PC-9 (cell line): ENCODE measurements at regions of chr2 and their contacts with region 1.

Region 1: DNA sequence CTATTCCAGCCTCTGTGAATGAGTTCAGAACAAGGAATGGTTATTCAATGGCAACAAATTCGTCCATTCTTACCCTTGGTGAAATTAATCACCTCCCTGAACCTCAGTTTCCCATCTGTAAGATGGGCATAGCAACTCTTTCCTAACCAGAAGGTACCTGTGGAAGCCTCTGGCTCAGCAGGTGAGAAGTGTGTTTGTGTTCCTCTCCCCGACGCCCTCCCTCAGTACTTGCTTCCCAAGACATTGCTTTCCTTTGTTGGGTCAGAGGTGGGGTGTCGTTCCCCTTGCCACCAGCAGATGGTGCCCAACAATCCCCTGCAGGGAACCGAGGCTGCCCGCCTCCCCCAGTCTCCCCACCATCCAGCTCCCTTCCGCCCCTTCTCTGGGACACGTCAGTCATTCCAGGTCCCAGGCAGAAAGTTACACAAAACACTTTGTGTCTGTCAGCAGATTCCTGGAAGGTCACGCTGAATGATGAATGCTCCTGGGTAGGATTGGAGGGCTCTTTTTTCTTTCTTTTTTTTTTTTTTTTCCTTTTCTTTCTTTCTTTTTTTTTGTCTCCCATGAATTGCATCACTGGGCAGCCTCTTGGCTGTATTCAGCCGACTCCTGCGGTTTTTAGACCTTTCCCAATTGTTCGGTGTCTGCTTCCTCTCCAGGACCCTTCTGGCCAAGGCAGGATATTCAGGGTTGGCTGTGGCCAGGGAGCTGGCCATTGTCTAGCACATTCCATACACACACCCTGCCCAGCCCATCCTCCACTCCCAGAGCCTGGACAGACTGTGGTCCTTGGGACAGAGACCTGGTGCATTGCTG is 117.3 kb downstream of the LPIN1 start:
- DNase-seq: peak; percentile 84 to 91
- H3K4me3 ChIP-seq: no peak overlapping the region
- H3K27ac ChIP-seq: peak overlapping the region; percentile 36
- H3K4me1 ChIP-seq: peaks cover 20% of the 10 kb centered on the region
- H3K27me3 ChIP-seq: no peaks in the 10 kb centered on the region
- CTCF ChIP-seq: peak; percentile 99

Region 2: GRCh38 chr2:11829947-11830707 is 33.6 kb before region 1 on chr2:
- CTCF ChIA-PET with region 1: no interaction called
- POLR2A ChIA-PET with region 1: no interaction called
- intact Hi-C with region 1: loop called (anchors 1 kb)
- DNase-seq: peak; percentile 85 to 99
- H3K4me3 ChIP-seq: peak overlapping the region; percentile 44
- H3K27ac ChIP-seq: peak overlapping the region; percentile 97
- H3K4me1 ChIP-seq: peaks cover 36% of the 10 kb centered on the region
- H3K27me3 ChIP-seq: no peaks in the 10 kb centered on the region
- CTCF ChIP-seq: peak; percentile 56; the same call in 1 of the 2 replicates

Region 3: GRCh38 chr2:12017499-12018157 is 153.9 kb after region 1 on chr2:
- CTCF ChIA-PET with region 1: no interaction called
- POLR2A ChIA-PET with region 1: interaction called, 10 read pairs
- intact Hi-C with region 1: no loop called
- DNase-seq: no peak
- H3K4me3 ChIP-seq: no peak overlapping the region
- H3K27ac ChIP-seq: no peak overlapping the region
- H3K4me1 ChIP-seq: no peaks in the 10 kb centered on the region
- H3K27me3 ChIP-seq: no peaks in the 10 kb centered on the region
- CTCF ChIP-seq: no peak

Region 4: GRCh38 chr2:12155303-12156051 is 291.8 kb after region 1 on chr2:
- CTCF ChIA-PET with region 1: no interaction called
- POLR2A ChIA-PET with region 1: no interaction called
- intact Hi-C with region 1: loop called (anchors 1 kb)
- DNase-seq: peak; percentile 58 to 86
- H3K4me3 ChIP-seq: no peak overlapping the region
- H3K27ac ChIP-seq: peak overlapping the region; percentile 79
- H3K4me1 ChIP-seq: peaks cover 36% of the 10 kb centered on the region
- H3K27me3 ChIP-seq: no peaks in the 10 kb centered on the region
- CTCF ChIP-seq: no peak

Region 5: GRCh38 chr2:12317814-12318426 is 454.2 kb after region 1 on chr2:
- CTCF ChIA-PET with region 1: no interaction called
- POLR2A ChIA-PET with region 1: no interaction called
- intact Hi-C with region 1: loop called (anchors 1 kb)
- DNase-seq: peak; percentile 12 to 86
- H3K4me3 ChIP-seq: no peak overlapping the region; the same call in 1 of the 2 replicates
- H3K27ac ChIP-seq: peak overlapping the region; percentile 92
- H3K4me1 ChIP-seq: peaks cover 44% of the 10 kb centered on the region
- H3K27me3 ChIP-seq: no peaks in the 10 kb centered on the region
- CTCF ChIP-seq: no peak

Region 6: DNA sequence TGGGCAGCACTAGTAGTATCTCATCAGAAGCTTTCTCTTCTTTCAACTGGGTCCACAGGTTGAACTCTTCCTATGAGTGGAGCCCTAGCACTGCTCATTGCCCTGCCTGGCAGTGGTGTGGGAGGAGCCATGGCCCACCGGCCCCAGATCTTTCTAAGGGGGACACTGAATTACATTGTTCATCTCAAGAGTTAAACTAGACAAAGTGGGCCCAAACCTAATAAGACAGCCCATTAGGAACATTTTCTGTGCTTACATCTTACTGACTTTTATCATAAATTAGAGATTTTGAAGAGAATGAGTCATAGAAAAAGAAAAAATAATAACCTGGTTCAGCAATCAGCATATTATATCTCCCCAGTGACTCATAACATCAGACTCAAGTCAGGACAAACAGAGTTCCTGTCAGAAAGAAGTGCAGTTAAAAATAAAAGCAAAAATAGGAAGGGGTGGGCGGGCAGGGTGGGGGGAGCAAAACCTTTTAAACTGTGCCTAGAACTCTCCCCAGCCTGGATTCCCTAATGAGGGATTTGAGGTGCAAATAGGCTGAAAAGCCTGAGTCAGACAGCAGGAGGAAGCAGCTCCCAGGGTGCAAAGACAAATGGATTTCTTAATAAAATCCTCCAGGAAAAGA is 691.4 kb after region 1 on chr2:
- CTCF ChIA-PET with region 1: no interaction called
- POLR2A ChIA-PET with region 1: no interaction called
- intact Hi-C with region 1: loop called (anchors 10 kb)
- DNase-seq: peak; percentile 18 to 70
- H3K4me3 ChIP-seq: no peak overlapping the region
- H3K27ac ChIP-seq: 0 out of 2 replicates have a peak overlapping the region, but pooled peaks have one; percentile 4
- H3K4me1 ChIP-seq: peaks cover 20% of the 10 kb centered on the region
- H3K27me3 ChIP-seq: no peaks in the 10 kb centered on the region
- CTCF ChIP-seq: no peak